Heart left ventricle (tissue), 16 donors: ENCODE measurements at regions of chr15 and their contacts with region 1.

Region 1: DNA sequence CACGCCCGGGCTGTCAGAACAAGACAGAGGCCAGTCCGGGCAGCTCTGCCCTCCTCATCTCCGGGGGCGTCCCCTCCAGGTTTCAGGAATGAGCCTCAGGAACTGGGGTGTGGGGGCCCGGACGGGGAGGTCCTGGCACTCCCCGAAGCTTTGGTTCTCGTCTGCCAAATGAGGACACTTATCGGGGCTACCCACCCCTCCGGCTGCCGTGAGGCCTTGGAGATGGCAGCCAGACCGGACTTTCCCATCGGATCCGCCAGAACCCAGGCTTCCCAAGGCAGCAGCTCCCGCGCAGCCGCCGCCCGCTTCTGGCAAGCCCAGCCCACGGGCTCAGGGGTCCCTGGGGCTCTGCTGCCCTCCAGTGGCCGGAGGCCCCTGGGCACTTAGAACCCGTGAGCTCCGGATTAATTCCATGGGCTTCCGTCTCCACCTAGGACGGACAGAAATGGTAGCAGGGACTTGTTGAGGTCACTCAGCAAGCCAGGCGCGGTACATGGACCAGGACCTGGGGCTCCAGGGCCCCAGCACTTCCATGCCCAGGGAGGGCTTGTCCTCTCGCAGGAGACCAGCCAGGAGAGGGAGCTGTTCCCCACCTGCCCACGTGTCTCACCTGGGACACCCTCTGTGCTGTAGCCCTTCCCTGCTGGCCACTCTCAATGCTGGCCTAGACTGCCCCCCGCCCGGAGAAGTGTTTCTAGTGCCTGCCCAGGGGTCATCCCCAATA is 89.4 kb downstream of the LINGO1 start:
- DNase-seq: peak; percentile 87 to 94 (median 90)
- ATAC-seq: peak; percentile 77 to 93 (median 90)
- H3K4me3 ChIP-seq: peak overlapping the region in 11 of 12 donors; percentile 7 to 57 (median 44)
- H3K27ac ChIP-seq: peak overlapping the region in 11 of 12 donors; percentile 53 to 86 (median 68)
- H3K4me1 ChIP-seq: peaks cover 4 to 54% (median 48%) of the 10 kb centered on the region in 12 donors
- H3K27me3 ChIP-seq: no peaks in the 10 kb centered on the region
- CTCF ChIP-seq: peak in 11 of 12 donors; percentile 90 to 99 (median 97)
- POLR2A ChIP-seq: peak in 1 of 2 donors; percentile 26

Region 2: GRCh38 chr15:76939715-76940114 is 603.6 kb before region 1 on chr15:
- intact Hi-C with region 1: loop called in 1 of 10 experiments (anchors 10 kb)
- DNase-seq: no peak
- ATAC-seq: no peak
- H3K4me3 ChIP-seq: no peak overlapping the region
- H3K27ac ChIP-seq: no peak overlapping the region
- H3K4me1 ChIP-seq: peaks cover 0 to 3% (median 0%) of the 10 kb centered on the region in 12 donors
- H3K27me3 ChIP-seq: no peaks in the 10 kb centered on the region
- CTCF ChIP-seq: no peak
- POLR2A ChIP-seq: no peak

Region 3: GRCh38 chr15:77107531-77108355 is 435.6 kb before region 1 on chr15:
- intact Hi-C with region 1: loop called in 3 of 10 experiments (anchors 1 to 5 kb)
- DNase-seq: peak in 4 of 5 donors; percentile 43 to 56 (median 49)
- ATAC-seq: peak; percentile 55 to 71 (median 70)
- H3K4me3 ChIP-seq: no peak overlapping the region
- H3K27ac ChIP-seq: peak overlapping the region in 9 of 12 donors; percentile 45 to 67 (median 58)
- H3K4me1 ChIP-seq: peaks cover 0 to 60% (median 36%) of the 10 kb centered on the region in 12 donors
- H3K27me3 ChIP-seq: no peaks in the 10 kb centered on the region
- CTCF ChIP-seq: peak; percentile 44 to 78 (median 61)
- POLR2A ChIP-seq: no peak

Region 4: DNA sequence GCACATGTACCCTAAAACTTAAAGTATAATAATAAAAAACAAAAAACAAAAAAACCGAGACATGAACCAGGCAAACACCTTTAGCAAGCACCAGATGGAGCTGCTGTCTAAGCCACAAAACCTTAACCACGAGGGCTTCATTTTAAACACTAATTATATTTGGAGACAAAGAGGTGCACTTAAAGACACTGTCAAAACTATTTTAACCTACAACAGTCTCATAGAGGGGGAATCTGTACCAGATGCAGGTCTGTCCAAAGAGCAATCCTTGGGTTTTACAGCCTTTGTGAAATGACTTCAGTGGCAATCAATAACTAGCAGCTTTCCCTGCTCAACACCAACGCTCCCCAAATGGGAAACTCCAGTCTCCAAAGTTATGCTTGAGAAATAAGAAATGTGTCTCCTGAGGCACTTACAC is 356.7 kb before region 1 on chr15:
- intact Hi-C with region 1: loop called (anchors 1 to 5 kb)
- DNase-seq: no peak
- ATAC-seq: peak in 3 of 4 donors; percentile 24 to 53 (median 33)
- H3K4me3 ChIP-seq: no peak overlapping the region
- H3K27ac ChIP-seq: peak overlapping the region; percentile 42 to 93 (median 86)
- H3K4me1 ChIP-seq: peaks cover 3 to 66% (median 49%) of the 10 kb centered on the region in 12 donors
- H3K27me3 ChIP-seq: no peaks in the 10 kb centered on the region
- CTCF ChIP-seq: peak; percentile 40 to 76 (median 64)
- POLR2A ChIP-seq: no peak

Region 5: GRCh38 chr15:77507911-77508310 is 35.4 kb before region 1 on chr15:
- intact Hi-C with region 1: loop called in 5 of 10 experiments (anchors 2 to 5 kb)
- DNase-seq: peak in 4 of 5 donors; percentile 81 to 86 (median 82)
- ATAC-seq: peak; percentile 90 to 93 (median 92)
- H3K4me3 ChIP-seq: peak overlapping the region in 3 of 12 donors; percentile 13 to 24 (median 21)
- H3K27ac ChIP-seq: peak overlapping the region; percentile 86 to 98 (median 94)
- H3K4me1 ChIP-seq: peaks cover 12 to 87% (median 63%) of the 10 kb centered on the region in 12 donors
- H3K27me3 ChIP-seq: no peaks in the 10 kb centered on the region
- CTCF ChIP-seq: no peak
- POLR2A ChIP-seq: peak; percentile 29 to 46

Region 6: GRCh38 chr15:77720655-77721054 is 177.3 kb after region 1 on chr15:
- intact Hi-C with region 1: no loop called
- DNase-seq: no peak
- ATAC-seq: no peak
- H3K4me3 ChIP-seq: no peak overlapping the region
- H3K27ac ChIP-seq: no peak overlapping the region
- H3K4me1 ChIP-seq: peaks cover 0 to 7% (median 0%) of the 10 kb centered on the region in 12 donors
- H3K27me3 ChIP-seq: peaks cover 0 to 13% (median 1%) of the 10 kb centered on the region in 9 donors
- CTCF ChIP-seq: no peak
- POLR2A ChIP-seq: no peak